ENCODE measurements at regions of chr5 and their contacts with region 1.

Region 1: DNA sequence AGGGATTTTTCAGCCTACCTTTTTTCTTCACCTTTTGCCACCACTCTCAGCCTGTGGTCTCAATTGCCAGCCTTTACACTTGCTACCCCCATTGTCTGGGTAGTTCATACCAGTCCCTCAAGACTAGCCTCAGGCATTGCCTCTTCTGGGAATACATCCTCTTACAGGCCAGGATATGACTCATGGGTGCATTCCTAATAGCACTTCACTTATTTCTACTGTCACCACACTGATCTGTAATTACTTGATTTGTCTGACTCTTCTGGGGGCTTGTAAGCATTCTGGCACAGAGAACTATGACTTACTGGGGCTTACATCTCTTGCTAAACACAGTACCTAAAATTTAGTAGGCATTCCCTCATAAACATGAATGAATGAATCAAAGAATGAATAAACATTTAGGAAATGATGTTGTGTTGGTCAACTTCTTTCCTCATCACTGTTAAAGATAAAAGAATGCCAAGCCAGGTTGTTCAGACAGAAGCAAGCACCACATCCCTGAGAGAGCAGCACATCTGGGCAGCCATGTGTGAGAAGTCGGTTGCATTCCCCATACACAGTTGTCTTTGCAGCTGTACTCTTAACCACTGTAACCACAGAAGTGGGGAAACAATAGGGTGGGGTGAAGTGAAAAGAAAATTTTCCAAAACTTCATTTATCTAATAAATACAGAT is 27.6 kb downstream of the IL7R start:
- DNase-seq: peak in 2 of 14 experiments; percentile 50 to 51
- ATAC-seq: peak; percentile 27
- H3K4me3 ChIP-seq: no peak overlapping the region
- H3K4me3 Mint-ChIP-seq: no peak overlapping the region
- H3K27ac ChIP-seq: no peak overlapping the region
- H3K27ac Mint-ChIP-seq: peak overlapping the region; percentile 55
- H3K4me1 ChIP-seq: peaks cover 21% of the 10 kb centered on the region
- H3K4me1 Mint-ChIP-seq: peaks cover 55% of the 10 kb centered on the region
- H3K27me3 ChIP-seq: no peaks in the 10 kb centered on the region
- H3K27me3 Mint-ChIP-seq: no peaks in the 10 kb centered on the region
- CTCF ChIP-seq: no peak

Region 2: GRCh38 chr5:35656721-35657120 is 227.5 kb before region 1 on chr5:
- CTCF ChIA-PET with region 1: interaction called, 7 read pairs
- POLR2A ChIA-PET with region 1: interaction called, 29 read pairs
- intact Hi-C with region 1: no loop called
- DNase-seq: no peak
- ATAC-seq: no peak
- H3K4me3 ChIP-seq: no peak overlapping the region
- H3K4me3 Mint-ChIP-seq: no peak overlapping the region
- H3K27ac ChIP-seq: no peak overlapping the region
- H3K27ac Mint-ChIP-seq: no peak overlapping the region
- H3K4me1 ChIP-seq: no peaks in the 10 kb centered on the region
- H3K4me1 Mint-ChIP-seq: peaks cover 31% of the 10 kb centered on the region
- H3K27me3 ChIP-seq: no peaks in the 10 kb centered on the region
- H3K27me3 Mint-ChIP-seq: no peaks in the 10 kb centered on the region
- CTCF ChIP-seq: no peak

Region 3: GRCh38 chr5:35822511-35822910 is 61.7 kb before region 1 on chr5:
- CTCF ChIA-PET with region 1: no interaction called
- POLR2A ChIA-PET with region 1: interaction called, 60 read pairs
- intact Hi-C with region 1: no loop called
- DNase-seq: peak; percentile 38 to 79 (median 58)
- ATAC-seq: peak; percentile 72
- H3K4me3 ChIP-seq: peak overlapping the region; percentile 5
- H3K4me3 Mint-ChIP-seq: peak overlapping the region; percentile 70
- H3K27ac ChIP-seq: peak overlapping the region; percentile 50 to 54
- H3K27ac Mint-ChIP-seq: peak overlapping the region; percentile 87
- H3K4me1 ChIP-seq: peaks cover 85% of the 10 kb centered on the region
- H3K4me1 Mint-ChIP-seq: peaks cover 90% of the 10 kb centered on the region
- H3K27me3 ChIP-seq: no peaks in the 10 kb centered on the region
- H3K27me3 Mint-ChIP-seq: no peaks in the 10 kb centered on the region
- CTCF ChIP-seq: no peak

Region 4: DNA sequence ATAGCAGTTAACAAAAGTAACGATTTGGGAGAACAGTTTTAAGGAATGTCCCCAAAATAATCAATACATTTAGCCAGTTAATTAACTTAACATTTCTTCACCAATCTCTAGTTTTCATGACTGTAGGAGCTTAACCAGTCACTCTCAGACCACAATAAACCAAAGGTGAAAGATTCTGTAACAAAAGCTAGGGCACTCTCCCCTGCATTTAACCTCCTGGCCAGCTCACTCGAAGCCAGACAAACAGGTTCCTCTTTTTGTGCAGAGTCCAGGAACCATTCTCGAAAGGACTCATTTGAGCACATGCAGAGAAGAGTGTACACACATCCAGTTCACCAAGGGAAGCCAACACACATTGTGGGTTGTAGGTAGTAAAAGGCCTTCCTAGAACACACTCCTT is 21.1 kb before region 1 on chr5:
- CTCF ChIA-PET with region 1: interaction called, 3 read pairs
- POLR2A ChIA-PET with region 1: interaction called, 82 read pairs
- intact Hi-C with region 1: no loop called
- DNase-seq: no peak
- ATAC-seq: no peak
- H3K4me3 ChIP-seq: peak overlapping the region; percentile 88
- H3K4me3 Mint-ChIP-seq: peak overlapping the region; percentile 93
- H3K27ac ChIP-seq: peak overlapping the region; percentile 43 to 63
- H3K27ac Mint-ChIP-seq: peak overlapping the region; percentile 99
- H3K4me1 ChIP-seq: peaks cover 18% of the 10 kb centered on the region
- H3K4me1 Mint-ChIP-seq: peaks cover 83% of the 10 kb centered on the region
- H3K27me3 ChIP-seq: no peaks in the 10 kb centered on the region
- H3K27me3 Mint-ChIP-seq: no peaks in the 10 kb centered on the region
- CTCF ChIP-seq: no peak

Region 5: DNA sequence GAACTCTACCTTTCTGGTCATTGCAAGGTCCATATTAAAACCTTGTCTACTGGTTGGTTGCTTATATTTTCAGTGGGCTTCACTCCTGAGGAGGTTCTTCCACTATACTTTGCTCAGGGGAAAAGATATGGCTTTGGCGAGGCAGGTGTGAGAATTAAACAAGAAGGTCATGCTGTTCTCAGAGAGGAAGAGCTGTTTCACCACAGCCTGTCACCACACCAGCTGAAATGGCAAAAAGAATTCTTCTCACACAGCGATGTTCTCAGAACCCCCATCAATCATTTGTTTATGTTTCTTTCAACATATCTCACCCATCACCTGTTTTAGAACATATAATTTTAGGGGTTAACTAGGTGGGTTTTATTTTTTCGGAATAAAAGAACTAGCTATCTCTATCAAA is 15.5 kb after region 1 on chr5:
- CTCF ChIA-PET with region 1: interaction called, 3 read pairs
- POLR2A ChIA-PET with region 1: interaction called, 35 read pairs
- intact Hi-C with region 1: no loop called
- DNase-seq: peak in 1 of 14 experiments; percentile 33
- ATAC-seq: no peak
- H3K4me3 ChIP-seq: no peak overlapping the region
- H3K4me3 Mint-ChIP-seq: no peak overlapping the region
- H3K27ac ChIP-seq: no peak overlapping the region
- H3K27ac Mint-ChIP-seq: peak overlapping the region; percentile 32
- H3K4me1 ChIP-seq: peaks cover 26% of the 10 kb centered on the region
- H3K4me1 Mint-ChIP-seq: peaks cover 58% of the 10 kb centered on the region
- H3K27me3 ChIP-seq: no peaks in the 10 kb centered on the region
- H3K27me3 Mint-ChIP-seq: no peaks in the 10 kb centered on the region
- CTCF ChIP-seq: no peak